ENCODE measurements at regions of chr20 and their contacts with region 1.

Region 1: DNA sequence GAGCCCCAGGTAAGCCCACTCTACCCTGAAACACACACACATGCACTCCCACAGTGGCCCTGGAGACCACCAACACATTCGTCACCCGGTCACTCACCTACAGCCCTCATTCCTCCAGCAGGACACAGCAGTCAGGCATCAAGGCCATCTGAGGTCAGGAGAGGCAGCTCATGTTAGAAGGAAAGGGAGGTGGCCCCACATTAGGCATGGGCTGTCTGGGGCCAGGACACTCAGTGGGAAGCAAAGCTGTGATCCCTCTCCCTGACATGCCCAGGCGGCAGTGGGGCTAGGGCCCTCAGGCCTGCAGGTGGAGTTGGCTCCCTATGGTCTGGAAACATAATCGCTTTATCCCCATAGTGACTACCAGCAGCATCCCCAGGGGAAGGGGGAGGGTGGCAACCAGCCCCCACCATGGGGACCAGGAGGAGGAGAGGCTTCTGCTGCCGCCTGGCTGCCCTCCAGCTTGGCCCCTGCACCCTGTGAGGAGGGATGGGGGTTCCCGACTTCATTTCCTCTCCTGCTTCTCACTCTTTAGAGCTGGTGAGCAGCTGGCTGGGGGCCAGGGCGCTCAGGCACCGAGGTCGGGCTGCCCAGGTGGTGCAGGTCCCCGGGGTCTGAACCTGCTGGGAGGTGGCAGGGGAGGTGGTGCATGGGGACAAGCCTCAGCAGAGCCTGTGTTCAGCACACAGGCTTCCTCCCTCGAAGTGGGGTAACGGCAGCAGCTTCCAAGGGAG is 76.6 kb upstream of the CST7 start:
- DNase-seq: no peak
- ATAC-seq: no peak
- H3K4me3 ChIP-seq: no peak overlapping the region
- H3K27ac ChIP-seq: no peak overlapping the region
- H3K4me1 ChIP-seq: no peaks in the 10 kb centered on the region
- H3K27me3 ChIP-seq: no peaks in the 10 kb centered on the region

Region 2: GRCh38 chr20:23946206-23946605 is 926.3 kb before region 1 on chr20:
- intact Hi-C with region 1: loop called in 1 of 2 experiments (anchors 5 kb)
- DNase-seq: no peak
- ATAC-seq: no peak
- H3K4me3 ChIP-seq: no peak overlapping the region
- H3K27ac ChIP-seq: no peak overlapping the region
- H3K4me1 ChIP-seq: no peaks in the 10 kb centered on the region
- H3K27me3 ChIP-seq: peaks cover 0 to 1% of the 10 kb centered on the region in 2 donors

Region 3: DNA sequence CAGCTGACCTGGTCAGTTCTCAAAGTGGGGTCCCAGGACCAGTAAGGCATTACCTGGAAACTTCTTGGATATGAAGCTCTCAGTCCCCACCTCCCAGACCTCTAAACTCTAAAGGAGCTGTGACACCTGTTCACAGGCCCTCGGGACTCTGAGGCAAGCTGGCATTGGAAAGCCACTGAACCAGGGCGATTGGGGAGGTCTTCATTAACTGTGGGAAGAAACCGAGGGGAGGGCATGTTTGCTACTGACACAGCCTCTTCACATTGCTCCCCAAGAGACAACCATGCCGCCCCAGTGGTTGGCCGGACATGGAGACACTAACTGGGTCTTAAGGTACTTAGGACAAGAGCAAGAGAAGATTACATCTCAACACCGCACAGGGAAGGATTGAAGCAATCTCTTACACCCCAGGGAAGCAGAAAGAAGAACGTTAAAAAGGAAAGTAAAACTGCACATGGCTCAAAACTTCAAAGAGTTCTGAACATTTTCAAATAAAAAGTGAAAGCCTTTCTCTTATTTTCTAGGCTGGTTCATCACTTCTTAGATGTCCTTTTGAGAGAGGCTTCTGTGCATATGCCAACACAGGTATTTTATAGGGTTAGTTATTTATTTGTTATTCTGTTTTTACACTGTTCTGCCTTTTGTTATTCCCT is 133.4 kb before region 1 on chr20:
- intact Hi-C with region 1: no loop called
- DNase-seq: no peak
- ATAC-seq: no peak
- H3K4me3 ChIP-seq: no peak overlapping the region
- H3K27ac ChIP-seq: no peak overlapping the region
- H3K4me1 ChIP-seq: no peaks in the 10 kb centered on the region
- H3K27me3 ChIP-seq: no peaks in the 10 kb centered on the region

Region 4: DNA sequence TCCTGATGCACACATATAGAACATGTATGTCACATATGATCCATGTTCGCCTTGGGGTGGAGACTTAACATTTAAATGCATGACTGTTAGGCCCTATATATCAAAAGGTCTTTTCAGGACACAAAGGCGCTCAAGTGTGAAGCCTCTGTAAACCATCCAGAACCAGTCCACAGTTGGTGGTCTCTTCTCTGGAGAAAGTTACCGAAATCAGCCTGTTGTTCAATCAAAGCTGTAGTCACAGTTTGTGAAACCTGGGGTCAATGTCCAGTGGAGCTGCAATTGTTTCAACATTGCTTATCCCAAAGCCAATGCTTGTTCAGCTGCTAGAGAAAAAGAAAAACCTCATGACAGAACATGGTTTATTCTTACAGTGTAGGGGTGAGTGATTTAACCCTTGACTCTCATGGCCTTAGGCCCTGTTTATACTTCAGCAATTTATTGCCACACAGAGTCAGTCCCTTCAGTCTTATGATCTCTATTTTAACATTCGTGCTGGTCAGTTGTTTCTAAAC is 117.0 kb before region 1 on chr20:
- intact Hi-C with region 1: no loop called
- DNase-seq: no peak
- ATAC-seq: no peak
- H3K4me3 ChIP-seq: no peak overlapping the region
- H3K27ac ChIP-seq: no peak overlapping the region
- H3K4me1 ChIP-seq: no peaks in the 10 kb centered on the region
- H3K27me3 ChIP-seq: no peaks in the 10 kb centered on the region

Region 5: GRCh38 chr20:24813936-24814335 is 58.5 kb before region 1 on chr20:
- intact Hi-C with region 1: no loop called
- DNase-seq: peak in 1 of 2 donors; percentile 61
- ATAC-seq: no peak
- H3K4me3 ChIP-seq: no peak overlapping the region
- H3K27ac ChIP-seq: no peak overlapping the region
- H3K4me1 ChIP-seq: no peaks in the 10 kb centered on the region
- H3K27me3 ChIP-seq: no peaks in the 10 kb centered on the region

Region 6: DNA sequence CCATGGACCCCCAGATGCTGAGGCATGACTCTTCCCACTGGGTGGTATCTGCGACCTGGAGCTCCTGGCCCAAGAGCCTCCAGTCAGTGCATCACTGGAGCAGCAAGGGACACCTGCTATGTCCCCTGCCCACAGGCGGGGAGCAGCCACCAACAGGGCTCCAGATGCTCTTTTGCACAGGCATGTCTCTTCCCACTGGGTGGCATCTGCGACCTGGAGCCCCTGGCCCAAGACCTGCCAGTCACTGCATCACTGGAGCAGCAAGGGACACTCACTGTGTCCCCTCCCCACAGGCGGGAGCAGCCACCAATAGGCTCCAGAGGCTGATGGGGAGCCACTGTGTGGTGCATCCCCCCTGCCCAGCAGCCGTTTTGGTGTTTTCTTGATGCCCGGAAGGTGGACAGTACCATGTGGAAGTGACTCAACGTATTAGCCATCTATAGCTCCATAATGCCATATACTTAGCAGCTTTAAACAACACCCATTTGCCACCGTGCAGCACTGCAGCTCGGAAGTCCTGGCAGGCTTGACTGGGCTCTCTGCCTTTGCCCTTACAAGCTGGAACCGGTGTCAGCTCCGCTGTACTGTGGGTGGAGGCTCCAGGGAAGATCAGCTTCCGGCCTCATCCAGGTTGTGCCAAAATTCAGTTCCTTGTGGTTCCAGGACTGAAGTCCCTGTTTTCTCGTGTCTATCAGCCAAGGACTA is 48.3 kb before region 1 on chr20:
- intact Hi-C with region 1: no loop called
- DNase-seq: no peak
- ATAC-seq: no peak
- H3K4me3 ChIP-seq: no peak overlapping the region
- H3K27ac ChIP-seq: no peak overlapping the region
- H3K4me1 ChIP-seq: no peaks in the 10 kb centered on the region
- H3K27me3 ChIP-seq: no peaks in the 10 kb centered on the region

Measured in aorta (tissue), 5 donors.